CD4-positive, alpha-beta memory T cell (primary cell): ENCODE measurements at regions of chr10 and their contacts with region 1.

Region 1: GRCh38 chr10:47311932-47312662 is 10.2 kb upstream of the GDF2 start:
- DNase-seq: peak; percentile 75 to 84 (median 79)
- H3K4me3 ChIP-seq: no peak overlapping the region
- H3K4me3 Mint-ChIP-seq: peak overlapping the region; percentile 48 to 80 (median 68)
- H3K27ac ChIP-seq: peak overlapping the region; percentile 27
- H3K27ac Mint-ChIP-seq: peak overlapping the region; percentile 81 to 87 (median 84)
- H3K4me1 ChIP-seq: peaks cover 32% of the 10 kb centered on the region
- H3K4me1 Mint-ChIP-seq: peaks cover 17 to 37% (median 27%) of the 10 kb centered on the region in 4 donors
- H3K27me3 ChIP-seq: no peaks in the 10 kb centered on the region
- H3K27me3 Mint-ChIP-seq: no peaks in the 10 kb centered on the region

Region 2: DNA sequence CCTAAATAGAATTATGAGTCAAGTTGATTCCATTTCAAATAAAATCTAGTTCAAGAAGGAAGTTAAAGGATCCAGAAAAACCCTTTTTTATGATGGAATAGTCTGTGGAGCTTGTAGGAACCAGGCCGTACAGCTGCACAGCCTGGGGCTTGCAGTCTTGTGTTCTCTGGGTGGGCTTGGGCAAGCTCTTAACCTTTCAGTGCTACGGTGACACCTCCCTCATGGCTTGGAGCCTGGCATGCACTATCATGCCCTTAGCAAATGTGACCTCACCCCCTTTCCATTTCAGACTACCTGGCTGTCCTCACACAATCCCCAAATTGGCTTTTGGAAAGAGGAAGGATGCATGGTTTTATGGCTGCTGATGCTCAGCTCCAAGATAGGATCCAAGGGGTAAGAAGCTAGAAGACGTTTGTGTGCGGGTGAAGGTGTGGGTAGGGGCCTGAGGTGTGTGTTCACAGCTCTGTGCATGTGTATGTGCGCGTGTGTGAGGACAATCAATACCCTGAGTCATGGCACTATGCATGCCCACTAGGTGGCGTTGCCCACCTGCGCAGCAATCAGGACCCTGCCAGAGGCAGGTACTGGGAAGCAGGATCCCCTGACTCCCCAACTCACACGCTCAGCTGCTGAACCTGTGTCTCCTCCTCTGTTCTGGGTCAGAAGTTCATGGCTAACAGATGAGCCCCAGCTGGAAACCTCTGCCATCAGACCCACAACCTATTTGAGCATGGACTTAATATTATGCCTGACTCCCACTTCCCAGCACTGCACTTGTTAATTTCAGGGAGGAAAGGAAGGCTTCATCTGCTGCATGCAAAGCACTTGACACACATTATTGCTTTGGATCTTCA is 287.5 kb before region 1 on chr10:
- CTCF ChIA-PET with region 1: interaction called, 101 read pairs
- POLR2A ChIA-PET with region 1: interaction called, 4 read pairs
- intact Hi-C with region 1: loop called (anchors 1 kb)
- DNase-seq: peak in 4 of 5 donors; percentile 51 to 62 (median 55)
- H3K4me3 ChIP-seq: no peak overlapping the region
- H3K4me3 Mint-ChIP-seq: no peak overlapping the region
- H3K27ac ChIP-seq: no peak overlapping the region
- H3K27ac Mint-ChIP-seq: peak overlapping the region in 2 of 7 donors; percentile 21 to 74
- H3K4me1 ChIP-seq: peaks cover 6% of the 10 kb centered on the region
- H3K4me1 Mint-ChIP-seq: peaks cover 0 to 4% (median 2%) of the 10 kb centered on the region in 4 donors
- H3K27me3 ChIP-seq: no peaks in the 10 kb centered on the region
- H3K27me3 Mint-ChIP-seq: peaks cover 0 to 1% of the 10 kb centered on the region in 2 donors

Region 3: GRCh38 chr10:47165711-47166524 is 146.2 kb before region 1 on chr10:
- CTCF ChIA-PET with region 1: interaction called, 12 read pairs
- POLR2A ChIA-PET with region 1: interaction called, 11 read pairs
- intact Hi-C with region 1: loop called (anchors 1 kb)
- DNase-seq: peak; percentile 44 to 61 (median 51)
- H3K4me3 ChIP-seq: peak overlapping the region; percentile 32 to 64
- H3K4me3 Mint-ChIP-seq: peak overlapping the region; percentile 86 to 94 (median 88)
- H3K27ac ChIP-seq: peak overlapping the region; percentile 40
- H3K27ac Mint-ChIP-seq: peak overlapping the region; percentile 84 to 96 (median 95)
- H3K4me1 ChIP-seq: peaks cover 22% of the 10 kb centered on the region
- H3K4me1 Mint-ChIP-seq: peaks cover 12 to 23% (median 18%) of the 10 kb centered on the region in 4 donors
- H3K27me3 ChIP-seq: no peaks in the 10 kb centered on the region
- H3K27me3 Mint-ChIP-seq: no peaks in the 10 kb centered on the region

Region 4: GRCh38 chr10:47225219-47225927 is 86.7 kb before region 1 on chr10:
- CTCF ChIA-PET with region 1: interaction called, 12 read pairs
- POLR2A ChIA-PET with region 1: interaction called, 3 read pairs
- intact Hi-C with region 1: no loop called
- DNase-seq: no peak
- H3K4me3 ChIP-seq: no peak overlapping the region
- H3K4me3 Mint-ChIP-seq: no peak overlapping the region
- H3K27ac ChIP-seq: no peak overlapping the region
- H3K27ac Mint-ChIP-seq: peak overlapping the region in 2 of 7 donors; percentile 12 to 80
- H3K4me1 ChIP-seq: peaks cover 4% of the 10 kb centered on the region
- H3K4me1 Mint-ChIP-seq: peaks cover 0 to 10% (median 4%) of the 10 kb centered on the region in 4 donors
- H3K27me3 ChIP-seq: no peaks in the 10 kb centered on the region
- H3K27me3 Mint-ChIP-seq: no peaks in the 10 kb centered on the region

Region 5: DNA sequence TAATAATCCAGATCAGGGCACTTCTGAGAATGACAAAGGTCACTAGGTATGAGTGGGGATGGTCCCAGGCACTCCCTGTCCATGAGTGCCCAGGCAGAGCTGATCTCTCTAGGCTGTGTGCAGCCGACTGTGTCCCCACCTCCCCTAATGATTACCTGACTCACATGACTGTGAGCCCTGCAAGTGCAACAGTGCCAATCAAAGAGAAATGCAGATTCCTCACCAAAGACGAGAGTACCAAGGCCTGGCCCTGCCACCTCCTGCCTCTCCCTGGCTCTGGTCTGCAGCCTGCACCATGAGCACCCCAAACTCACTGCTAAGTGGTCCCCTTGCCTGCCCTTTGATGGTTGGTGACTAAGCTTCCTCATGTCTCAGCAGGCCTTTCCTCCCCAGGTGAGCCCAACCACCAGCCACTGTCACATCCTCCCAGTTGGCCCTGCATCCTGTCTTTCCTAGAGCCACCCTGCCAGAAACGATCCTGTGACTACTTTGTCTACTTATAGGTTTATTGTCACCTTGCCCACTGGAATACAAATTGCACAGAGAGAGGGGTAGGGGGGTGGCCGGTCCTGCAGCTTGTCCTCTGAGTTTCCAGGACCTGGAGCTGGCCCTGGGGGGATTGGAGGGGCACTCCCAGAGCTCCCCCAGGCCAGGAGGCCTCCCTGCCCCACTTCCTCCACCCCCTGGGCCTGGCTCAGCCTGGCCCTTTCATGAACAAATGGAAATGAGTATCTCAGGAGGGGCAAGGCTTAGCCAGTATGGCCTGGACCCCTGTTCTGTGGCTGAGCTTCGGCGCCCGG is 34.5 kb before region 1 on chr10:
- CTCF ChIA-PET with region 1: interaction called, 12 read pairs
- POLR2A ChIA-PET with region 1: interaction called, 8 read pairs
- intact Hi-C with region 1: no loop called
- DNase-seq: peak in 4 of 5 donors; percentile 19 to 74 (median 34)
- H3K4me3 ChIP-seq: no peak overlapping the region
- H3K4me3 Mint-ChIP-seq: peak overlapping the region in 5 of 8 donors; percentile 22 to 76 (median 57)
- H3K27ac ChIP-seq: no peak overlapping the region
- H3K27ac Mint-ChIP-seq: peak overlapping the region in 6 of 7 donors; percentile 7 to 86 (median 46)
- H3K4me1 ChIP-seq: peaks cover 26% of the 10 kb centered on the region
- H3K4me1 Mint-ChIP-seq: peaks cover 11 to 33% (median 22%) of the 10 kb centered on the region in 4 donors
- H3K27me3 ChIP-seq: no peaks in the 10 kb centered on the region
- H3K27me3 Mint-ChIP-seq: no peaks in the 10 kb centered on the region